Psoas muscle (tissue), 8 donors: ENCODE measurements at regions of chr2 and their contacts with region 1.

Region 1: DNA sequence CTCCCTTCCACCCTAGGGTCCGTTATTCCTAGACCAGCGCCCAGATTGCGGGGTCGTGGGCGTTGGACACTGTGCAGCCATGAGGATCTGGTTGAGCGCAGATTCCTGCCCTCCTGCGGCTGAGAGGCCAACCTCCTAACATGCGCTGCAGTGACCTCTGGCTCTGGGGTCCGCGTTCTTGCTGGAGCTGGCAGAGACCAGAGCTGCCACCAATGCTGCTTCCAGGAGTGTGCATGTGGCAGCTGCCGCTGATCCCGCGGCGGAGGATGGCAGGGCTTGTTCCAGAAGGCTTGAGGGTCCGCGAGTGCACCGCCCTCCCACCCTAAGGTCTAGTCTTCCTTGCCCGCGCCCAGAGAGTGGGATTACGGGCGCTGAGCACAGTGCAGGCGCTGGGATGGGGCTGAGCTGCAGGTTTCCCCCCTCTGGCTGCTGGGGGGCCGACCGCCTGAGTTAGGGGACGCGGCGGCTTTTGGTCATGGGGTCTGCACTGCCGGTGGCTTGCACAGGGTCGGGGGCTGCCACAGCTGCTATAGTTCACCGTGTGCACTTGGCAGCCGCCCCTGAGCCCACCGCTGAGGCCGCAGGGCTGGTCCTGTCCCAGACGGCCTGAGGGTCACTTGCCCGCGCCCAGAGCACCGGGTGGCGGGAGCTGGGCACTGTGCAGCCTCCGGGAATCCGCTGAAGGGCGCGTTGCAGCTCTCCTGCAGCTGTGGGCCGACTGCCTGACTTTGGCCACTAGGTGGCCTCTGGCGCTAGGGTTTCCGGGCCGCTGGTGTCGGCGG is 145.9 kb downstream of the CCDC74A start:
- DNase-seq: peak; percentile 80 to 86
- ATAC-seq: peak; percentile 93 to 97 (median 94)
- H3K4me3 ChIP-seq: peak overlapping the region; percentile 61
- H3K27ac ChIP-seq: no peak overlapping the region
- H3K4me1 ChIP-seq: peaks cover 11% of the 10 kb centered on the region
- H3K27me3 ChIP-seq: no peaks in the 10 kb centered on the region
- CTCF ChIP-seq: peak; percentile 90

Region 2: DNA sequence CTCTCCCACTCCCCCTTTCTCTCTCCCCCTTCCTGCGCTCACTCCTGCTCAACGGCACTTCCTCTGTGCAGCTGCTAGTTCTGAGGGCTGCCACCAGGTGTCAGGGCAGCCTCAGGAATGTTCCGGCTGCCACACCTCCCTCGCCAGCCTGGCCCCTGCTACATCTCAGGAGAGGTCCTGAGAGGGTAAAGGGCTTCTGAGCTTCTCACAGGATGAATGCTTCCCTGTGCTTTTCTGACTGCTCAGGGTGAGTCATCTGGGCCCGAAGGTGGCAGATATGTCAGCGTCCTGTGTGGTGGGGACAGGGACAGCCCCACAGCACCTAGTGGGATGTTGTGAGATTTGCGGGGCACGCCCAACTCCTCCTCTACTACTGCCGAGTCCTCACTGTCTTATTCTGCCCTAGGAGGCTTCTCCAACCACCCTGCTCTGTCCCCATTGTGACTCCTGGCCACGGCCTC is 519.5 kb before region 1 on chr2:
- intact Hi-C with region 1: loop called in 1 of 2 experiments (anchors 10 kb)
- DNase-seq: peak; percentile 34 to 72
- ATAC-seq: peak; percentile 80 to 92 (median 84)
- H3K4me3 ChIP-seq: no peak overlapping the region
- H3K27ac ChIP-seq: no peak overlapping the region
- H3K4me1 ChIP-seq: no peaks in the 10 kb centered on the region
- H3K27me3 ChIP-seq: no peaks in the 10 kb centered on the region
- CTCF ChIP-seq: peak; percentile 76

Region 3: GRCh38 chr2:131413148-131413747 is 260.3 kb before region 1 on chr2:
- intact Hi-C with region 1: loop called in 1 of 2 experiments (anchors 5 kb)
- DNase-seq: no peak
- ATAC-seq: peak; percentile 56 to 73 (median 62)
- H3K4me3 ChIP-seq: no peak overlapping the region
- H3K27ac ChIP-seq: no peak overlapping the region
- H3K4me1 ChIP-seq: no peaks in the 10 kb centered on the region
- H3K27me3 ChIP-seq: peaks cover 0 to 20% (median 1%) of the 10 kb centered on the region in 3 donors
- CTCF ChIP-seq: peak; percentile 80

Region 4: DNA sequence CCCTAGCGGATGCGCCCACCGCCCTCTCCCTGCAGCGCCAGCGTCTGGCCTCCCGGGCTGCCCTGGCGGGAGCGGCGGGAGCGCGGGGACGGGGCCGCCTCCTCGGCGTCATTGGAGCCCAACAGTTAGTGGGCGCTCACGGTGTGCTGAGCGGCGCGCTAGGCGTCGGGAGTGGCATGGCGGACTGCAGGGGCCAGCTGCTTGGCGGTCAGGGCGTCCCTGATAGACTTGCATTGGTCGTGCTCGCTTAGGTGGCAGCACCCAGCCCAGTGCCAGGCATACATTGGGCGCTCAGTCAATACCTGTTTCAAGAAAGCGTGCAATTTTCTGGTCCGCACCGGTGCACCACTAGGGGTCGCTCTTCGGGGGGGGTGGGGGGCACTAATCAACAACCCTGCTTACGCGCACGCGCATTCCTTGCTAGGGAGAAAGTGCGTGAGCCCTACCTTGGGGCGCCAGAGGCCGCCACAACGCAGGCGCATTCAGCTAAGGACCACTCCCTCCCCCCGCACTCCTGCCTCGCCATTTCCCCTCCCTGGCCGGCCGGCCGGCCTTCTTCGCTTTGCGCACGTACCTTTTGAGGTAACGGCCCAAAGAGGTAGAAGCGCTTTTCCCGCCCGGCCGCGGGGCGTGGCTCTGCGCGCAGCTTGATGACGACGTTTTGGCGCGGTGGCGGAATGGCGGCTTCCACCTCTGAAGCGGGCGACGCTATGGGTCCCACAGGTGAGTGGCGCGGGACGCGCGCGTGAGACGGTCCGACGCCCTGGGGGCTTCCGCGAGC is 181.0 kb before region 1 on chr2:
- intact Hi-C with region 1: loop called (anchors 10 kb)
- DNase-seq: peak; percentile 91 to 96
- ATAC-seq: peak; percentile 89 to 94 (median 92)
- H3K4me3 ChIP-seq: peak overlapping the region; percentile 90
- H3K27ac ChIP-seq: peak overlapping the region; percentile 84
- H3K4me1 ChIP-seq: peaks cover 5% of the 10 kb centered on the region
- H3K27me3 ChIP-seq: no peaks in the 10 kb centered on the region
- CTCF ChIP-seq: peak; percentile 70

Region 5: DNA sequence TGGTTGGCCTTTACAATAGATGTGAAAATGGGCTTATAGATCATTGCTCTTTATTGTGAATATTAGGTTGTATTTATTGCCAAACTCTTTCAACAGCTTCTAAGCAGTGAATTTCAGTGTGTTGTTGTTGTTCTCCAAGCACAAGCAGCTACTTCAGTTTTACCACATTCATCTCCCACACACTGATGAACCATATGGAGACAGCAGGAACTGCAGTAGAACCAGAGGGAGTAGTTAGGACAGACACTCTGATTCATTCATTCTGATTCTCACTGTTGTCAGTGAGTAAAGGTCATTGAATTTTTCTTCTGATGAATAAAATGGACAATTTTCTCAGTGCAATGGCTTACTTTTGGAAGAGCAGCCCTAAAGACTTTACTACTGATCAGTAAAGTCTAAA is 105.7 kb before region 1 on chr2:
- intact Hi-C with region 1: no loop called
- DNase-seq: no peak
- ATAC-seq: no peak
- H3K4me3 ChIP-seq: no peak overlapping the region
- H3K27ac ChIP-seq: no peak overlapping the region
- H3K4me1 ChIP-seq: no peaks in the 10 kb centered on the region
- H3K27me3 ChIP-seq: peaks cover 0 to 4% (median 0%) of the 10 kb centered on the region in 3 donors
- CTCF ChIP-seq: no peak

Region 6: DNA sequence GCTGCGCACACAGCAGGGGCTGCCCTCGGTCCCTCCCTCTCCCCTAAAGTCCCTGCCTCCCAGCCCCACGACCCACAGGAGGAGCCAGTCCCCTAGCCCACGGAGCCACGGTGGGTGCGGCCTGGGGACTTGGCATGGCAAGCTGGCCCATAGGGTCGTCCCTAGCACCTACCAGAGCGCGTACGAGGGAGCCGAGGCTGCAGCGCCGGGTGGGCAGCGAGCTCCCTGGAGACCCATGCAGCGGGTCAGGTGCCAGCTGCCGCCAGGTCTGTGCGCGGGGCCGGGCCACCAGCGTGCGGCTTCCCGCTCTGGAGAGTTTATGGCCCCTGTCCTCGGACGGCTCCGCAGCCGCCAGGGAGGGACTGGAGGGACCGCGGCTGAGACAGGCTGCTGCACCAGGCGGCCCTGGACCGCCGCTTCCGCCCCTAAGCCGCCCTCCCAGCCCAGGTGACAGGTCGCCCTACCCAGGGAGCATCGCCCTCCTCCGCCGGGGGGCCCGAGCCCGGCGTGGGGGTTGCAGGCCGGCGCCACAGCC is 127.7 kb after region 1 on chr2:
- intact Hi-C with region 1: loop called (anchors 5 to 10 kb)
- DNase-seq: no peak
- ATAC-seq: no peak
- H3K4me3 ChIP-seq: peak overlapping the region; percentile 54
- H3K27ac ChIP-seq: no peak overlapping the region
- H3K4me1 ChIP-seq: no peaks in the 10 kb centered on the region
- H3K27me3 ChIP-seq: peaks cover 0 to 10% (median 2%) of the 10 kb centered on the region in 3 donors
- CTCF ChIP-seq: no peak